ENCODE measurements at regions of chr16 and their contacts with region 1.

Region 1: GRCh38 chr16:67017810-67018488 is 11.0 kb upstream of the CBFB start:
- DNase-seq: peak; percentile 94
- ATAC-seq: peak; percentile 86
- H3K4me3 Mint-ChIP-seq: no peak overlapping the region
- H3K27ac Mint-ChIP-seq: peak overlapping the region; percentile 46
- H3K4me1 Mint-ChIP-seq: peaks cover 41% of the 10 kb centered on the region
- H3K27me3 Mint-ChIP-seq: no peaks in the 10 kb centered on the region

Region 2: GRCh38 chr16:66947302-66948065 is 70.5 kb before region 1 on chr16:
- CTCF ChIA-PET with region 1: interaction called, 10 read pairs
- DNase-seq: peak; percentile 92
- ATAC-seq: peak; percentile 88
- H3K4me3 Mint-ChIP-seq: peak overlapping the region; percentile 79
- H3K27ac Mint-ChIP-seq: peak overlapping the region; percentile 57
- H3K4me1 Mint-ChIP-seq: peaks cover 33% of the 10 kb centered on the region
- H3K27me3 Mint-ChIP-seq: peaks cover 21% of the 10 kb centered on the region

Region 3: GRCh38 chr16:66977341-66978113 is 40.4 kb before region 1 on chr16:
- CTCF ChIA-PET with region 1: interaction called, 41 read pairs
- DNase-seq: peak; percentile 93
- ATAC-seq: peak; percentile 99
- H3K4me3 Mint-ChIP-seq: no peak overlapping the region
- H3K27ac Mint-ChIP-seq: peak overlapping the region; percentile 75
- H3K4me1 Mint-ChIP-seq: peaks cover 57% of the 10 kb centered on the region
- H3K27me3 Mint-ChIP-seq: no peaks in the 10 kb centered on the region

Region 4: GRCh38 chr16:67006930-67007658 is 10.9 kb before region 1 on chr16:
- CTCF ChIA-PET with region 1: interaction called, 60 read pairs
- DNase-seq: no peak
- ATAC-seq: no peak
- H3K4me3 Mint-ChIP-seq: no peak overlapping the region
- H3K27ac Mint-ChIP-seq: peak overlapping the region; percentile 9
- H3K4me1 Mint-ChIP-seq: peaks cover 25% of the 10 kb centered on the region
- H3K27me3 Mint-ChIP-seq: no peaks in the 10 kb centered on the region

Region 5: GRCh38 chr16:67055712-67056487 is 38.0 kb after region 1 on chr16:
- CTCF ChIA-PET with region 1: interaction called, 14 read pairs
- DNase-seq: peak; percentile 49
- ATAC-seq: peak; percentile 73
- H3K4me3 Mint-ChIP-seq: peak overlapping the region; percentile 48
- H3K27ac Mint-ChIP-seq: peak overlapping the region; percentile 82
- H3K4me1 Mint-ChIP-seq: peaks cover 61% of the 10 kb centered on the region
- H3K27me3 Mint-ChIP-seq: no peaks in the 10 kb centered on the region

Region 6: DNA sequence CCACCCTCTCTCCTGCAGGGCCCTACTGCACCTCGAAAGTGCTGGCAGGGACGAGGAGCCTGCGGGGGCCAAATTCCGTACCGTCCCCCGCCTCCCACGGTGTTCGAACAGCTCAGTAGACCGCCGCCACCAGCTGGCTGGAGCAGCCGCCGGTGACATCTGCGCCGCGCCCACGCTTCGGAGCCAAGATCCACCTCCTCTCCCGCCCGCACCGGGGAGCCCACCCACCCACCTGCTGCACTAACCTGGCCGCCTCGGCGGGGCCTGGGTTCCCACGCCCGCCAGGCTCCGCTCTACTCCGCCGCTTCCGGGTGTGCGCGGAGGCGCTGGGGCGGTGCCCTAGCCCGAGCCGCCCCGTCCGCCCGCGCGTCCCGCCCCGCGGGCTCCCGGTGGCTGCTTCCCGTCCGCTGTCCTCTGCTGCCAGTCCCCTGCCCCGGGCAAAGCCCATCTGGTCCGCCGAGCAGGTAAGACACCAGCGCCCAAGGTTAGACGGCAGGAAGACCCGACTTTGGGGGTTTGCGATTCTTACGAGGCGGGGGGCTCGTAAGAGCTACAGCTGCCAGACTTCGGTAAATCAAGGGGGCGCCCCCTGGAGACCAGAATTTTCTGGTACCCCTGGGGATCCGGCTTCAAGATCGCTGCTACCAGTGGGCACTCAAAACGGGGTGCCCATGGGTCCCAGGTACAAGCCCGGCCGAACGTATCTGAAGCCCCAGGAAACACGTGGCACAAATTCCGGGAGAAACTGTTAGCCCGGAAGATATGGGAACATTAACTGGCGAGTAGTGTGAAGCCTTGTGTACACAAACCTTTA is 141.9 kb after region 1 on chr16 and contains the starts of genes FBXL8 and TRADD:
- CTCF ChIA-PET with region 1: interaction called, 395 read pairs
- DNase-seq: peak; percentile 89
- ATAC-seq: peak; percentile 76
- H3K4me3 Mint-ChIP-seq: peak within 1 kb of the TSS; percentile 92
- H3K27ac Mint-ChIP-seq: peak within 1 kb of the TSS; percentile 97
- H3K4me1 Mint-ChIP-seq: peaks cover 62% of the 10 kb centered on the region
- H3K27me3 Mint-ChIP-seq: peaks cover 13% of the 10 kb centered on the region
- total RNA-seq, gene FBXL8: 15.7 to 24.5 TPM
- total RNA-seq, gene TRADD: 36.4 to 52.6 TPM

Region 7: GRCh38 chr16:68131813-68132706 is 1114.1 kb after region 1 on chr16:
- CTCF ChIA-PET with region 1: no interaction called
- DNase-seq: no peak
- ATAC-seq: no peak
- H3K4me3 Mint-ChIP-seq: no peak overlapping the region
- H3K27ac Mint-ChIP-seq: peak overlapping the region; percentile 26
- H3K4me1 Mint-ChIP-seq: peaks cover 26% of the 10 kb centered on the region
- H3K27me3 Mint-ChIP-seq: no peaks in the 10 kb centered on the region

Measured in activated CD8-positive, alpha-beta memory T cell treated with anti-CD3 and anti-CD28 coated beads, Interleukin-2, amount 10 ng/mL, durations not matched to agents 7 days and 5 days (primary cell).